PC-3 (cell line): ENCODE measurements at regions of chr12 and their contacts with region 1.

Region 1: DNA sequence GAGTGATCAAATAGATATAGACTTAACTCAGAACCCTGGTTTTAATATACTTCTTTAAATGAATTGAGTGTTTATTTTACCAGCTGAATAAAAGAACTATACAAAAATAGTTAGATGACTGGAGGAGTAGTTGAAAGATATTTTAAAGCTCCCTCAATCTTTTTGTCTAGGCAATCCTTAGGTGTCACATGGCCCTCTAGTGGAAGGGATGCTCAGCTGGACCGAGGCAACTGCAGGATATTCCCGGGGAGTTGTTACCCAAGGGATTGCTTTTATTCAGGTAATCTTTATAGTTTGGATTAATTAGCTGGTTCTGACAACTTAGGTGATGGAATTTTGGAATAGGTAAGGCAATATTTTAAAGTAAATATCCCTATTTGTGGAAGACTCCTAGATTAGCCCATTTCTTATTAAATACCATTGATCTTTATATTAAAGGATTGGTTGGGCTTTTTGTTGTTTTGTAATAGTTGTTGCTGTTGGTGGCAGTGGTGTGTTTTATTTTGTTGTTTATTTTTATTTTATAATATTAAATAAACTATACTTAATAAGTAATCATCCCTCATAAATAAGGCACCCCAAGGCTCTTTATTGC is 57.1 kb downstream of the ZDHHC17 start:
- DNase-seq: peak; percentile 58
- ATAC-seq: peak; percentile 70
- H3K4me3 ChIP-seq: no peak overlapping the region
- H3K27ac ChIP-seq: no peak overlapping the region
- H3K4me1 ChIP-seq: no peaks in the 10 kb centered on the region
- H3K27me3 ChIP-seq: no peaks in the 10 kb centered on the region
- CTCF ChIP-seq: peak; percentile 88

Region 2: DNA sequence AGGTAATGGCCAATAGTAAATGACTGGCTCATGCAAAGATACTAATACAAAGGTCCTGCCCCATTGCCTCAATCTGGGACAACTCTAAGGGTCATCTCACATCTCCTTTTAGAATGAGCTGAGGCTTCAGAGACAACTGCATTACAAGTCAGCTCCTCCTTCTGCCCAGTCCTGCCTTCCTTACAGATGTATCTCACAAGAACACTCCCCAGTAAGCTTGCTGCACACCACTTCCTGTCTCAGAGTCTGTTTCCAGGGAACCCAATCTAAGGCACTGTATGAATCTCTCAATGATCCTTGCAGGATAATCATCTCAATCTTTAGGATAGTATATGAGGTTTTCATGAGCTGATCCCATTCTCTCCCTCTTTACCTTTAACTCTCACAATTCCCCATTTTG is 114.9 kb before region 1 on chr12:
- CTCF ChIA-PET with region 1: no interaction called
- POLR2A ChIA-PET with region 1: no interaction called
- intact Hi-C with region 1: no loop called
- DNase-seq: peak; percentile 17
- ATAC-seq: no peak
- H3K4me3 ChIP-seq: no peak overlapping the region
- H3K27ac ChIP-seq: no peak overlapping the region
- H3K4me1 ChIP-seq: peaks cover 16% of the 10 kb centered on the region
- H3K27me3 ChIP-seq: no peaks in the 10 kb centered on the region
- CTCF ChIP-seq: no peak

Region 3: GRCh38 chr12:77031745-77032144 is 210.8 kb after region 1 on chr12:
- CTCF ChIA-PET with region 1: no interaction called
- POLR2A ChIA-PET with region 1: no interaction called
- intact Hi-C with region 1: no loop called
- DNase-seq: no peak
- ATAC-seq: no peak
- H3K4me3 ChIP-seq: no peak overlapping the region
- H3K27ac ChIP-seq: no peak overlapping the region
- H3K4me1 ChIP-seq: no peaks in the 10 kb centered on the region
- H3K27me3 ChIP-seq: no peaks in the 10 kb centered on the region
- CTCF ChIP-seq: no peak

Region 4: GRCh38 chr12:78420991-78421390 is 1600.0 kb after region 1 on chr12:
- CTCF ChIA-PET with region 1: no interaction called
- POLR2A ChIA-PET with region 1: no interaction called
- intact Hi-C with region 1: loop called (anchors 10 kb)
- DNase-seq: no peak
- ATAC-seq: no peak
- H3K4me3 ChIP-seq: no peak overlapping the region
- H3K27ac ChIP-seq: no peak overlapping the region
- H3K4me1 ChIP-seq: no peaks in the 10 kb centered on the region
- H3K27me3 ChIP-seq: no peaks in the 10 kb centered on the region
- CTCF ChIP-seq: no peak